ENCODE measurements at regions of chr20 and their contacts with region 1.

Region 1: GRCh38 chr20:32796981-32797451 is 22.7 kb upstream of the MAPRE1 start:
- DNase-seq: no peak
- H3K4me3 ChIP-seq: no peak overlapping the region
- H3K27ac ChIP-seq: no peak overlapping the region
- H3K4me1 ChIP-seq: no peaks in the 10 kb centered on the region
- H3K27me3 ChIP-seq: no peaks in the 10 kb centered on the region
- CTCF ChIP-seq: no peak

Region 2: GRCh38 chr20:32302507-32302872 is 494.5 kb before region 1 on chr20:
- CTCF ChIA-PET with region 1: no interaction called
- POLR2A ChIA-PET with region 1: interaction called, 12 read pairs
- intact Hi-C with region 1: no loop called
- DNase-seq: no peak
- H3K4me3 ChIP-seq: no peak overlapping the region
- H3K27ac ChIP-seq: no peak overlapping the region
- H3K4me1 ChIP-seq: no peaks in the 10 kb centered on the region
- H3K27me3 ChIP-seq: no peaks in the 10 kb centered on the region
- CTCF ChIP-seq: no peak

Region 3: DNA sequence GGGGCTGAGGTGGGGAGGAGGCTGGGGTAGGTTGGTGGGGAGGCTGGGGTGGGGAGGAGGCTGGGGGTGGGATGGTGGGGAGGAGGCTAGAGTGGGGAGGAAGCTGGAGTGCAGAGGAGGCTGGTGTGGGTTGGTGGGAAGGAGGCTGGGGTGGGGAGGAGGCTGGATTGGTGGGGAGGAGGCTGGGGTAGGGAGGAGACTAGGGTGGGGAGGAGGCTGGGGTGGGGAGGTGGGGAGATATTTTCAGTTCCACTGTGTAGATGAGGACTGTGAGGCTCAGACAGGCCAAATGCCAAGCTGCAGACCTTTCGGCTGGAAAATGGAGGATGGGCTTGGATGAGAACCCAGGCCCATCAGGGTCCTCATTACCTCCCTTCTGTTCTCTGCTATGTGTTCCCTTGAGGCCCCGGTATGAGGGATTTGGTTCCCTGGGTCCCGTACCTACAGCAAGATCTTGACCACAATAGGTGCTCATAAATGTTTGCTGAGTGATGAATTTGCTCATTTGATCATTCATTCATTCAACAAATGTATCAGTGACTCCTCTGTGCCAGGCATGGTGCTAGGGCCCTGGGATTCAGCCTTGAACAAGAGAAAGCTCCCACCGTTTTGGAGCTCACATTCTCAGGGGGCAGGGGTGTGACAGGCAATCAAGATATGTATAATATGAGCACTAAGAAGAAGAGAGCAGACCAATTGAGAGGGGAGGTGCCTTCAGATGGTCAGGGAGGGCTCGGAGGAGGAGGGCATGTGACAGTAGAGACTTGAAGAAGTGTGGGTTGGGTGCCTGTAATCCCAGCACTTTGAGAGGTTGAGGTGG is 175.7 kb before region 1 on chr20:
- CTCF ChIA-PET with region 1: no interaction called
- POLR2A ChIA-PET with region 1: no interaction called
- intact Hi-C with region 1: no loop called
- DNase-seq: no peak
- H3K4me3 ChIP-seq: no peak overlapping the region
- H3K27ac ChIP-seq: no peak overlapping the region
- H3K4me1 ChIP-seq: no peaks in the 10 kb centered on the region
- H3K27me3 ChIP-seq: no peaks in the 10 kb centered on the region
- CTCF ChIP-seq: no peak

Region 4: DNA sequence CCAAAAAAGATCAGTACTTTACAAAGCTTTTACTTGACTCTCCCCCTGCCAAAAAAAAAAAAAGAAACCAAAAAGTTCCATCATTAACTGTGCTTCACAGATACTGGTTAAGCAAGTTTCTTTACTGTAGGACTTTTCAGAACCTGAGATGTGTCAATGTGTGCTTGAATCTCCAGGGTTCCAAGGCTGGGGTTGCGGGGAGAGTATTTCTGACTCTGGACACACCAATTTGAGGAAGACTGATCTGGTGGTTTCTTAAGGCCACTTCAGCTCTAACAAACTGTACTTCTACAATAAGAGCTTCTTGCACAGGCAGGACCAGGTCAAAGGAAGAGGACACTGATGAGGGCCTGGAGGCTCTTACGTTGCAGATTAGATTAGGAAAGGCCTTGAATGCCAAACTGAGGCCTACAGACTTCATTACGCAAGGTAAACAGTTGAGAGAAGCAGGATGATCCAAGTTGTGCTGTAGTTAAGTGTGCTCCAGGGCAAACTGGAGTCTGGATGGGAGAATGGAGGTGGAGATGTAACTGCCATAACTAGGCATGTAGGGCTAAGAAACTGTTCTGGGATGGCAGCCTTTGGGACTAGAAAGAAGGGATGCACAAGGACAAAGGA is 78.2 kb before region 1 on chr20:
- CTCF ChIA-PET with region 1: no interaction called
- POLR2A ChIA-PET with region 1: no interaction called
- intact Hi-C with region 1: no loop called
- DNase-seq: no peak
- H3K4me3 ChIP-seq: no peak overlapping the region
- H3K27ac ChIP-seq: no peak overlapping the region
- H3K4me1 ChIP-seq: no peaks in the 10 kb centered on the region; the same call in 1 of the 2 replicates
- H3K27me3 ChIP-seq: no peaks in the 10 kb centered on the region
- CTCF ChIP-seq: no peak